ENCODE measurements at regions of chr7 and their contacts with region 1.

Region 1: GRCh38 chr7:127347567-127348246 is 44.8 kb downstream of the ZNF800 start:
- DNase-seq: peak; percentile 68 to 74 (median 71)
- H3K4me3 ChIP-seq: no peak overlapping the region
- H3K4me3 Mint-ChIP-seq: peak overlapping the region; percentile 60 to 87 (median 74)
- H3K27ac ChIP-seq: no peak overlapping the region
- H3K27ac Mint-ChIP-seq: peak overlapping the region in 3 of 7 donors; percentile 19 to 58 (median 42)
- H3K4me1 ChIP-seq: peaks cover 9% of the 10 kb centered on the region
- H3K4me1 Mint-ChIP-seq: peaks cover 17 to 31% (median 20%) of the 10 kb centered on the region in 4 donors
- H3K27me3 ChIP-seq: no peaks in the 10 kb centered on the region
- H3K27me3 Mint-ChIP-seq: no peaks in the 10 kb centered on the region

Region 2: DNA sequence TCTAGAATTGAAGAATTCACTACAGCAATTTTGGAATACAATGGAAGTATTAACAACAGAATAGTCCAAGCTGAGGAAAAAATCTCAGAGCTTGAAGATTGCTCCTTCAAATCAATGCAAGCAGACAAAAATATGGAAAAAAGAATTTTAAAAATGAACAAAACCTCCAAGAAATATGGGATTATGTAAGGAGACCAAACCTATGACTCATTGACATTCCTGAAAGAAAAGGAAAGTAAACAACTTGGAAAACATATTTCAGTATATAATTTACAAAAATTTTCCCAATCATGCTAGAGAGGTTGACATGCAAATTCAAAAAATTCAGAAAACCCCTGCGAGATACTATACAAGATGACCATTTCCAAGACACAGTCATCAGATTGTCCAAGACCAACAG is 52.9 kb before region 1 on chr7:
- CTCF ChIA-PET with region 1: no interaction called
- POLR2A ChIA-PET with region 1: no interaction called
- intact Hi-C with region 1: no loop called
- DNase-seq: no peak
- H3K4me3 ChIP-seq: no peak overlapping the region
- H3K4me3 Mint-ChIP-seq: no peak overlapping the region
- H3K27ac ChIP-seq: no peak overlapping the region
- H3K27ac Mint-ChIP-seq: no peak overlapping the region
- H3K4me1 ChIP-seq: no peaks in the 10 kb centered on the region
- H3K4me1 Mint-ChIP-seq: no peaks in the 10 kb centered on the region
- H3K27me3 ChIP-seq: no peaks in the 10 kb centered on the region
- H3K27me3 Mint-ChIP-seq: peaks cover 10 to 20% of the 10 kb centered on the region in 2 donors

Region 3: DNA sequence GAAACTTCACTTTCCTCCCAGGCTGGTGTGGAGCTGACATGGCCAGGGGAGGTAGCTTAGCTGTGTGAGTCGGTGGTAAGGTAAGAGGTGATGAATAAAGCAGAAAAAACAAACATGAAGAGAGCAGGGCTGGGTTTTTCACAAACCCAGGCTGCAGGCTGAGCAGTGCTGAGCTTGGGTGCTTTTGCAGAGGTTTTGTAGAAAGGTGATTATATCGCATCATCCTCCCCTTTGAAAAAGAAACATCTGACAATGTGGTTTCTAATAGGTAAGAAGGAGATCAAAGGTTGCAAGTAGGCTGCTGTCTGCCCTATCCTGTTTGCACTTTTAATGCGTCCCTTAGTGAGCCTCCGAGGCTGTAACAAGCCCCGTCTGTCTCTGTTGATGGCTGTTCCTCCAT is 25.4 kb before region 1 on chr7:
- CTCF ChIA-PET with region 1: interaction called, 24 read pairs
- POLR2A ChIA-PET with region 1: interaction called, 4 read pairs
- intact Hi-C with region 1: loop called (anchors 2 kb)
- DNase-seq: peak; percentile 37 to 67 (median 62)
- H3K4me3 ChIP-seq: no peak overlapping the region
- H3K4me3 Mint-ChIP-seq: peak overlapping the region; percentile 46 to 68 (median 60)
- H3K27ac ChIP-seq: no peak overlapping the region
- H3K27ac Mint-ChIP-seq: peak overlapping the region; percentile 9 to 87 (median 76)
- H3K4me1 ChIP-seq: peaks cover 25% of the 10 kb centered on the region
- H3K4me1 Mint-ChIP-seq: peaks cover 18 to 31% (median 26%) of the 10 kb centered on the region in 4 donors
- H3K27me3 ChIP-seq: no peaks in the 10 kb centered on the region
- H3K27me3 Mint-ChIP-seq: peaks cover 0 to 4% of the 10 kb centered on the region in 2 donors

Region 4: DNA sequence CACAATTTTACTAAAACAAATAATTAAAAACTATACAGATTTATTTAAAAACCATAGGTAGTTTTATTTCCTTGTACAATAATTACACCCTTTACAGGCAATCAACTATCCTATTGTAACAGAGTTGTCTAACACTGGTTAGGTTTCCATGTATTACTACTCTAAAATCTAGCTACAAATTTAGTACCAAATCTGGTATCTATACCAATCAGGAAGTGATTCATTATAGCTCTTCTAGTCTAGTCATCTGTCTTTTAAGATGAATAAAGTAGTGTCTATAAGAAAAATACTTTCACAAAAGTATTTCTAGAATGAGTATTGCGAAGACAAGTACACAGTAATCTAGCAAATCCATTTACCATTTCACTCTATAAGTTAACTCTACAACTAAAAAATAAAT is 27.9 kb after region 1 on chr7:
- CTCF ChIA-PET with region 1: interaction called, 11 read pairs
- POLR2A ChIA-PET with region 1: interaction called, 8 read pairs
- intact Hi-C with region 1: no loop called
- DNase-seq: no peak
- H3K4me3 ChIP-seq: no peak overlapping the region
- H3K4me3 Mint-ChIP-seq: no peak overlapping the region
- H3K27ac ChIP-seq: no peak overlapping the region
- H3K27ac Mint-ChIP-seq: peak overlapping the region in 1 of 7 donors; percentile 22
- H3K4me1 ChIP-seq: peaks cover 29% of the 10 kb centered on the region
- H3K4me1 Mint-ChIP-seq: peaks cover 35 to 53% (median 44%) of the 10 kb centered on the region in 4 donors
- H3K27me3 ChIP-seq: no peaks in the 10 kb centered on the region
- H3K27me3 Mint-ChIP-seq: no peaks in the 10 kb centered on the region

Region 5: DNA sequence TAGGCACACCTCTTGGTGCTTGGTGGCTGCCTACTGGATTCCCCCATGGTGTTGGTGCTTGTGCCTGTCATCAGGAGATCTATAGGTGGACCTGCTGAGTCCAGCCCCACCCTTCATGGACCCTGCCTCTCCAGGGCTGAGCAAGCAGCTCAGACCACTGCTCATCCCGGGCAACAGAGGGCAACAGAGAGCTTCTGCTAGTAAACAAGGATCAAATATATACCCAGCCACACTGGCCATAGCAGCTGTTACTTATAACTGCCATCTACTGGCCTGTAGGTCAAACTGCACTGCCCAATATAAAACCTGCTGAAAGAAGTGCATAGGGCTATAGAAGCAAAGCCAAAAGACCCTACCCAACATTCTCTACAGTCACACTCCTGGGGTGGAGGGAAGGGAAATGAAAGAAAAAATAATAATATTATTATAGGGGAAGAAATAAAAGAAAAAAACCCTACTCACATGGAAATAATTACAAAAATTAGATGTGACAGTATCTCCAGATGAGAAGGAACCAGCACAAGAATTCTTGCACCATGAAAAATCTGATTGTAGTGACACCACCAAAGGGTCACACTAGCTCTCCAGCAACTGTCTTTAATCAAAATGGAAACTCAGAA is 99.7 kb after region 1 on chr7:
- CTCF ChIA-PET with region 1: interaction called, 44 read pairs
- POLR2A ChIA-PET with region 1: interaction called, 10 read pairs
- intact Hi-C with region 1: loop called (anchors 1 kb)
- DNase-seq: peak; percentile 62 to 68 (median 65)
- H3K4me3 ChIP-seq: no peak overlapping the region
- H3K4me3 Mint-ChIP-seq: no peak overlapping the region
- H3K27ac ChIP-seq: no peak overlapping the region
- H3K27ac Mint-ChIP-seq: peak overlapping the region in 1 of 7 donors; percentile 43
- H3K4me1 ChIP-seq: peaks cover 17% of the 10 kb centered on the region
- H3K4me1 Mint-ChIP-seq: peaks cover 9 to 18% (median 15%) of the 10 kb centered on the region in 4 donors
- H3K27me3 ChIP-seq: no peaks in the 10 kb centered on the region
- H3K27me3 Mint-ChIP-seq: peaks cover 7 to 10% of the 10 kb centered on the region in 2 donors

Region 6: DNA sequence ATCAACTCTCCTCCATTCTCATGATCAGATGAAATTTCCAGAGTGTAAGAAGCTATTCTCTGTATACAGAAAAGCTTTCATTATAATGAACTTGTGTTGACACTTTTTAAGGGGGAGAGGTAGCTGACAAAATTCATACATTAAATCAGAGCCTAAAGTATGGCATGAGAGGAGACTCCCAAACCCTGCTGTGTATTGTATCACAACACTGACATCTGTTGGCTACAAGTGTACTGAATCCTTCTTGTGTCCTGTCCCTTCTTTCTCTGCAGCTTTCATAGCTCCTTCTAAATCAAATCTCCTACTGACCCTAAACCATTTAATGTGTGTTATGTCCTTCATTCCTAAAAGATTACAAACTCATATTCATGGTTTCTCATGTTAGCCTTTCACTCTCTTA is 166.8 kb after region 1 on chr7:
- CTCF ChIA-PET with region 1: interaction called, 8 read pairs
- POLR2A ChIA-PET with region 1: interaction called, 3 read pairs
- intact Hi-C with region 1: loop called (anchors 1 kb)
- DNase-seq: peak in 4 of 5 donors; percentile 22 to 44 (median 36)
- H3K4me3 ChIP-seq: no peak overlapping the region
- H3K4me3 Mint-ChIP-seq: no peak overlapping the region
- H3K27ac ChIP-seq: no peak overlapping the region
- H3K27ac Mint-ChIP-seq: no peak overlapping the region
- H3K4me1 ChIP-seq: no peaks in the 10 kb centered on the region
- H3K4me1 Mint-ChIP-seq: no peaks in the 10 kb centered on the region
- H3K27me3 ChIP-seq: no peaks in the 10 kb centered on the region
- H3K27me3 Mint-ChIP-seq: peaks cover 27 to 28% of the 10 kb centered on the region in 2 donors

Region 7: DNA sequence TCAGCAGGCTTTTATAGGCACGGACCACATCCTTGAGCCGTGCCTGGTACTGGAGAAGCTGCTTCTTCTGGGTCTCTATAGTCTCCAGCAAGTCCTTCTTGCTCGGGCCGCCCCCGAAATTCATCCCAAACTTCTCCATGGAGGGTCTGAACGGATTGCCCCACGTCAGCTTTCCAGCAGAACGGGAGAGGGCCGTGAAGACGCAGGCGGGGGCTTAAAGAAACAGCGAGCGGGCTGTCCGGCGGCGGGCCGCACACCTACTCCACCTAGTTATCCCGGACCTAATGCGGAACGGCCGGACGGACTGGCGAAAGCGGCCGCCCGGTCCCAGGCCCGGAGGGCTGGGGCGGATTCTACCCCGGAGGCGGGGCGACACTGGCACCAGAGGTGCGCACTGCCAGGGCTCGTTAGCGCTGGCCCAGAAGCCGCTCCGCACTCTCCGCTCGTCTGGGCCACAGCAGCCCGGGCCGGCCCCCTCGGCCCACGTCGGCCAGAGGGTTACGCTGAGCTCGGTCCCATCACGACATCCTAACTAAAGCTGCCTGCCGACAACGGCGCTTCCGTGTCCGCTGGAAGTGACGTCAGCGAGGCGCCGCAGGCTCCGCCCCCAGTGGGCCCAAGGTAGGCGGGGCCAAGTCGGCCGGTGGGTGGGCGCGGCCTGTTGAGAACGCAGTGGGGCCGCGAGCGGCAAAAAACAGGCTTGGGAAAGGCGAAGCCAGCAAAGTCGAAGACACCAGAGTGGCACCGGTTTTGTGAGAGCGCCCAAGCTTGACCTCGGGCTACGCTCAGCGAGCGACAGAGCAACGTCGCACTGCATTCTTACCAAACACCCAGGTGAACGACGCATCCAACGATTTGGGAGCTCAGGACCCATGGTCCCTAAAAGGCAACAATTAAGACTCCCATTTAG is 237.6 kb after region 1 on chr7 and contains the start of gene GCC1:
- CTCF ChIA-PET with region 1: interaction called, 3 read pairs
- POLR2A ChIA-PET with region 1: no interaction called
- intact Hi-C with region 1: loop called (anchors 5 kb)
- DNase-seq: peak; percentile 90 to 95 (median 91)
- H3K4me3 ChIP-seq: peak within 1 kb of the TSS; percentile 80 to 90
- H3K4me3 Mint-ChIP-seq: peak within 1 kb of the TSS; percentile 89 to 96 (median 92)
- H3K27ac ChIP-seq: peak within 1 kb of the TSS; percentile 89
- H3K27ac Mint-ChIP-seq: peak within 1 kb of the TSS; percentile 88 to 97 (median 95)
- H3K4me1 ChIP-seq: peaks cover 77% of the 10 kb centered on the region
- H3K4me1 Mint-ChIP-seq: peaks cover 41 to 87% (median 74%) of the 10 kb centered on the region in 4 donors
- H3K27me3 ChIP-seq: no peaks in the 10 kb centered on the region
- H3K27me3 Mint-ChIP-seq: no peaks in the 10 kb centered on the region
- total RNA-seq, gene GCC1: 29.1 to 30.0 TPM